ENCODE measurements at regions of chr5 and their contacts with region 1.

Region 1: GRCh38 chr5:18220631-18221030 is 586.4 kb downstream of the TAF11L14 start:
- DNase-seq: no peak
- ATAC-seq: no peak
- H3K4me3 ChIP-seq: no peak overlapping the region
- H3K27ac ChIP-seq: no peak overlapping the region
- H3K4me1 ChIP-seq: no peaks in the 10 kb centered on the region
- H3K27me3 ChIP-seq: no peaks in the 10 kb centered on the region
- CTCF ChIP-seq: no peak

Region 2: GRCh38 chr5:18299166-18299565 is 78.5 kb after region 1 on chr5:
- CTCF ChIA-PET with region 1: no interaction called
- POLR2A ChIA-PET with region 1: no interaction called
- in situ Hi-C with region 1: no loop called
- intact Hi-C with region 1: no loop called
- DNase-seq: no peak
- ATAC-seq: no peak
- H3K4me3 ChIP-seq: no peak overlapping the region
- H3K27ac ChIP-seq: no peak overlapping the region
- H3K4me1 ChIP-seq: no peaks in the 10 kb centered on the region
- H3K27me3 ChIP-seq: no peaks in the 10 kb centered on the region; the same call in 1 of the 2 replicates
- CTCF ChIP-seq: no peak

Region 3: GRCh38 chr5:19940192-19940591 is 1719.6 kb after region 1 on chr5:
- CTCF ChIA-PET with region 1: no interaction called
- POLR2A ChIA-PET with region 1: interaction called, 12 read pairs
- in situ Hi-C with region 1: no loop called
- intact Hi-C with region 1: no loop called
- DNase-seq: no peak
- ATAC-seq: no peak
- H3K4me3 ChIP-seq: no peak overlapping the region
- H3K27ac ChIP-seq: no peak overlapping the region
- H3K4me1 ChIP-seq: no peaks in the 10 kb centered on the region
- H3K27me3 ChIP-seq: no peaks in the 10 kb centered on the region
- CTCF ChIP-seq: no peak

Measured in Panc1 (cell line).